ENCODE measurements at regions of chr2 and their contacts with region 1.

Region 1: GRCh38 chr2:101831351-101831865 is 133.9 kb downstream of the MAP4K4 start:
- DNase-seq: peak; percentile 79
- H3K4me3 Mint-ChIP-seq: no peak overlapping the region
- H3K27ac Mint-ChIP-seq: peak overlapping the region; percentile 86
- H3K4me1 Mint-ChIP-seq: peaks cover 53% of the 10 kb centered on the region
- H3K27me3 Mint-ChIP-seq: no peaks in the 10 kb centered on the region

Region 2: GRCh38 chr2:101419096-101419663 is 412.2 kb before region 1 on chr2:
- CTCF ChIA-PET with region 1: interaction called, 13 read pairs
- DNase-seq: peak; percentile 75
- H3K4me3 Mint-ChIP-seq: no peak overlapping the region
- H3K27ac Mint-ChIP-seq: no peak overlapping the region
- H3K4me1 Mint-ChIP-seq: no peaks in the 10 kb centered on the region
- H3K27me3 Mint-ChIP-seq: peaks cover 16% of the 10 kb centered on the region

Region 3: GRCh38 chr2:101698014-101698843 is 133.2 kb before region 1 on chr2:
- CTCF ChIA-PET with region 1: interaction called, 23 read pairs
- DNase-seq: peak; percentile 47
- H3K4me3 Mint-ChIP-seq: peak overlapping the region; percentile 63
- H3K27ac Mint-ChIP-seq: peak overlapping the region; percentile 73
- H3K4me1 Mint-ChIP-seq: peaks cover 23% of the 10 kb centered on the region
- H3K27me3 Mint-ChIP-seq: no peaks in the 10 kb centered on the region

Region 4: GRCh38 chr2:101790857-101791256 is 40.6 kb before region 1 on chr2:
- CTCF ChIA-PET with region 1: no interaction called
- DNase-seq: no peak
- H3K4me3 Mint-ChIP-seq: no peak overlapping the region
- H3K27ac Mint-ChIP-seq: no peak overlapping the region
- H3K4me1 Mint-ChIP-seq: peaks cover 18% of the 10 kb centered on the region
- H3K27me3 Mint-ChIP-seq: no peaks in the 10 kb centered on the region

Region 5: GRCh38 chr2:101809698-101810097 is 21.7 kb before region 1 on chr2:
- CTCF ChIA-PET with region 1: no interaction called
- DNase-seq: no peak
- H3K4me3 Mint-ChIP-seq: no peak overlapping the region
- H3K27ac Mint-ChIP-seq: no peak overlapping the region
- H3K4me1 Mint-ChIP-seq: peaks cover 31% of the 10 kb centered on the region
- H3K27me3 Mint-ChIP-seq: no peaks in the 10 kb centered on the region

Region 6: DNA sequence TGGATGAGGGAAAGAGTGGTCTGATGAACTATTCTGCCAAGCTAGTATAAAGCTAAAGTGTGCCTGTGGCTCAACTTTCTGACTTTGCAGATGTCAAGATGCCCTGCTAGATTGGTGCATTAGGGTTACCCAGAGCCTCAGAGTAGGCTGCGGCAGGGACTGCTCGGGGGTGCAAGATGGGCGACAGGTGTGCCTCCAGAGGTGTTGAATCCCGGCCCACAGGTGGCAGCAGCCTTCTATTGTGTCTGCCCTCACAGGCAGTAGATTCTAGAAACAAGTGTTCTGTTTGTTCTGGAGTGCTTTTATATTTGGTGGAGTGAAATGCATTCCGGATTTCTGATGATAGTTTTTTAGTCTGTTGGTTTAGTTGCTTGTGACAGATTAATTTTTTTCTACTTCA is 28.7 kb after region 1 on chr2:
- CTCF ChIA-PET with region 1: no interaction called
- DNase-seq: no peak
- H3K4me3 Mint-ChIP-seq: no peak overlapping the region
- H3K27ac Mint-ChIP-seq: peak overlapping the region; percentile 20
- H3K4me1 Mint-ChIP-seq: peaks cover 16% of the 10 kb centered on the region
- H3K27me3 Mint-ChIP-seq: no peaks in the 10 kb centered on the region

Measured in activated naive CD4-positive, alpha-beta T cell treated with anti-CD3 and anti-CD28 coated beads, Interleukin-2, amount 10 ng/mL, durations not matched to agents 7 days and 5 days (primary cell).